ENCODE measurements at regions of chr10 and their contacts with region 1.

Region 1: GRCh38 chr10:131885391-131886161 is 15.2 kb upstream of the PPP2R2D start:
- DNase-seq: peak; percentile 57 to 84
- ATAC-seq: peak; percentile 94 to 98 (median 95)
- H3K4me3 ChIP-seq: no peak overlapping the region
- H3K27ac ChIP-seq: no peak overlapping the region
- H3K4me1 ChIP-seq: peaks cover 0 to 8% (median 2%) of the 10 kb centered on the region in 9 donors
- H3K27me3 ChIP-seq: peaks cover 0 to 24% (median 2%) of the 10 kb centered on the region in 7 donors
- CTCF ChIP-seq: peak; percentile 95 to 98 (median 97)

Region 2: DNA sequence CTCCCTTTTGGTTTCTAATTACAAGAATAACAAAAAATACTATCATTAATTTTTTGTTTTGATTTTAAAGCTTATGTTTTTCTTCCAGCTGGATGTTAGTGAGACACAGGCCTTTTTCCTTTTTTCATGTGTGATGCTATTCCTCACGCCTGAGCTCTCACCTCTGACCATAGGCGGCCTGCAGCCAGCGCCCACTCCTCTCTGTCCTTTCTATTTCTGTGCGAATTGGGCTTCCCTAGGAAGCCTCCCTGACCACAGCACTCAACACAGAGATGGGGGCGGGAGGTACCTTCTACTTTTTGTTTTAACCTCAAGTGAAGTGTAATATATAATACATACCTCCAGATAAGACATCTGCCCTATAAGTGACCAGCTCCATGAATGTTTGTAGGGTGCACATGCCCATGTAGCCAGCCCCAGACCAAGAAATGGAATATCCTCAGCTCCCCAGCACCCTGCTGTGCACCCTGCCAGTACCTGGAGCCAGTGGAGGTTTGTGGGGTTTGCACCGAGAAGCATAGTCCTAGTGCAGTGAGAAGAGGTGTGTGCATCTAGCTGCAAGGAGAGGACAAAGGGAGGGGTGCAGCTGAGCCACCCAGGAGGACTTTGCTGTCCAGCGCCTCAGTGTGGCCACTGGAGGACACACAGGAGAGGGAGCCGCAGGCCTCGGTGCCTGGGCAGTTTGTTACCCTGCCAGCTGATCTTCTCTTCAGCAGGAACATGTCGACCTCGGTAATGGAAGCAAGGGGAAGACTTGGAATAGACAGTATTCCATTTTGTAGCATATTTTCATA is 57.6 kb after region 1 on chr10:
- intact Hi-C with region 1: loop called in 2 of 10 experiments (anchors 5 kb)
- DNase-seq: no peak
- ATAC-seq: peak in 6 of 8 donors; percentile 71 to 86 (median 74)
- H3K4me3 ChIP-seq: no peak overlapping the region
- H3K27ac ChIP-seq: no peak overlapping the region
- H3K4me1 ChIP-seq: peaks cover 0 to 6% (median under 1%) of the 10 kb centered on the region in 9 donors
- H3K27me3 ChIP-seq: no peaks in the 10 kb centered on the region
- CTCF ChIP-seq: peak; percentile 8 to 62 (median 44)

Region 3: GRCh38 chr10:132023092-132023811 is 137.7 kb after region 1 on chr10:
- intact Hi-C with region 1: loop called (anchors 1 to 2 kb)
- DNase-seq: peak; percentile 82 to 89
- ATAC-seq: peak; percentile 78 to 95 (median 90)
- H3K4me3 ChIP-seq: peak overlapping the region; percentile 28 to 45 (median 34)
- H3K27ac ChIP-seq: no peak overlapping the region
- H3K4me1 ChIP-seq: peaks cover 0 to 12% (median 8%) of the 10 kb centered on the region in 9 donors
- H3K27me3 ChIP-seq: peaks cover 0 to 43% (median 34%) of the 10 kb centered on the region in 7 donors
- CTCF ChIP-seq: peak; percentile 87 to 97 (median 91)

Measured in heart right ventricle (tissue), 16 donors.